ENCODE measurements at regions of chr2 and their contacts with region 1.

Region 1: GRCh38 chr2:64720535-64721327 is 67.0 kb upstream of the SERTAD2 start:
- DNase-seq: no peak
- ATAC-seq: no peak
- H3K4me3 ChIP-seq: no peak overlapping the region
- H3K4me3 Mint-ChIP-seq: peak overlapping the region in 8 of 10 donors; percentile 21 to 75 (median 66)
- H3K27ac ChIP-seq: no peak overlapping the region
- H3K27ac Mint-ChIP-seq: peak overlapping the region in 5 of 9 donors; percentile 14 to 90 (median 64)
- H3K4me1 ChIP-seq: peaks cover 0 to 4% of the 10 kb centered on the region in 2 donors
- H3K4me1 Mint-ChIP-seq: peaks cover 0 to 40% (median 20%) of the 10 kb centered on the region in 7 donors
- H3K27me3 ChIP-seq: no peaks in the 10 kb centered on the region
- H3K27me3 Mint-ChIP-seq: no peaks in the 10 kb centered on the region

Region 2: GRCh38 chr2:64311948-64312621 is 408.6 kb before region 1 on chr2:
- CTCF ChIA-PET with region 1: no interaction called
- POLR2A ChIA-PET with region 1: no interaction called
- intact Hi-C with region 1: no loop called
- DNase-seq: no peak
- ATAC-seq: peak; percentile 38
- H3K4me3 ChIP-seq: no peak overlapping the region
- H3K4me3 Mint-ChIP-seq: no peak overlapping the region
- H3K27ac ChIP-seq: no peak overlapping the region
- H3K27ac Mint-ChIP-seq: peak overlapping the region in 2 of 9 donors; percentile 32 to 63
- H3K4me1 ChIP-seq: no peaks in the 10 kb centered on the region
- H3K4me1 Mint-ChIP-seq: peaks cover 0 to 2% (median 0%) of the 10 kb centered on the region in 7 donors
- H3K27me3 ChIP-seq: no peaks in the 10 kb centered on the region
- H3K27me3 Mint-ChIP-seq: peaks cover 0 to 46% (median 0%) of the 10 kb centered on the region in 5 donors

Region 3: GRCh38 chr2:64338910-64339500 is 381.7 kb before region 1 on chr2:
- CTCF ChIA-PET with region 1: no interaction called
- POLR2A ChIA-PET with region 1: no interaction called
- intact Hi-C with region 1: no loop called
- DNase-seq: no peak
- ATAC-seq: no peak
- H3K4me3 ChIP-seq: no peak overlapping the region
- H3K4me3 Mint-ChIP-seq: no peak overlapping the region
- H3K27ac ChIP-seq: no peak overlapping the region
- H3K27ac Mint-ChIP-seq: peak overlapping the region in 1 of 9 donors; percentile 37
- H3K4me1 ChIP-seq: no peaks in the 10 kb centered on the region
- H3K4me1 Mint-ChIP-seq: peaks cover 0 to 7% (median 0%) of the 10 kb centered on the region in 7 donors
- H3K27me3 ChIP-seq: no peaks in the 10 kb centered on the region
- H3K27me3 Mint-ChIP-seq: peaks cover 0 to 10% (median 0%) of the 10 kb centered on the region in 5 donors

Region 4: GRCh38 chr2:64704161-64704560 is 16.6 kb before region 1 on chr2:
- CTCF ChIA-PET with region 1: interaction called, 4 read pairs
- POLR2A ChIA-PET with region 1: no interaction called
- intact Hi-C with region 1: loop called in 1 of 2 experiments (anchors 2 kb)
- DNase-seq: no peak
- ATAC-seq: no peak
- H3K4me3 ChIP-seq: no peak overlapping the region
- H3K4me3 Mint-ChIP-seq: no peak overlapping the region
- H3K27ac ChIP-seq: no peak overlapping the region
- H3K27ac Mint-ChIP-seq: no peak overlapping the region
- H3K4me1 ChIP-seq: peaks cover 0 to 5% of the 10 kb centered on the region in 2 donors
- H3K4me1 Mint-ChIP-seq: peaks cover 9 to 24% (median 12%) of the 10 kb centered on the region in 7 donors
- H3K27me3 ChIP-seq: no peaks in the 10 kb centered on the region
- H3K27me3 Mint-ChIP-seq: no peaks in the 10 kb centered on the region

Region 5: GRCh38 chr2:65846989-65847678 is 1126.4 kb after region 1 on chr2:
- CTCF ChIA-PET with region 1: no interaction called
- POLR2A ChIA-PET with region 1: no interaction called
- intact Hi-C with region 1: no loop called
- DNase-seq: no peak
- ATAC-seq: no peak
- H3K4me3 ChIP-seq: no peak overlapping the region
- H3K4me3 Mint-ChIP-seq: no peak overlapping the region
- H3K27ac ChIP-seq: no peak overlapping the region
- H3K27ac Mint-ChIP-seq: no peak overlapping the region
- H3K4me1 ChIP-seq: no peaks in the 10 kb centered on the region
- H3K4me1 Mint-ChIP-seq: no peaks in the 10 kb centered on the region
- H3K27me3 ChIP-seq: peaks cover 0 to 2% of the 10 kb centered on the region in 2 donors
- H3K27me3 Mint-ChIP-seq: peaks cover 0 to 21% (median 6%) of the 10 kb centered on the region in 5 donors